ENCODE measurements at regions of chr1 and their contacts with region 1.

Region 1: DNA sequence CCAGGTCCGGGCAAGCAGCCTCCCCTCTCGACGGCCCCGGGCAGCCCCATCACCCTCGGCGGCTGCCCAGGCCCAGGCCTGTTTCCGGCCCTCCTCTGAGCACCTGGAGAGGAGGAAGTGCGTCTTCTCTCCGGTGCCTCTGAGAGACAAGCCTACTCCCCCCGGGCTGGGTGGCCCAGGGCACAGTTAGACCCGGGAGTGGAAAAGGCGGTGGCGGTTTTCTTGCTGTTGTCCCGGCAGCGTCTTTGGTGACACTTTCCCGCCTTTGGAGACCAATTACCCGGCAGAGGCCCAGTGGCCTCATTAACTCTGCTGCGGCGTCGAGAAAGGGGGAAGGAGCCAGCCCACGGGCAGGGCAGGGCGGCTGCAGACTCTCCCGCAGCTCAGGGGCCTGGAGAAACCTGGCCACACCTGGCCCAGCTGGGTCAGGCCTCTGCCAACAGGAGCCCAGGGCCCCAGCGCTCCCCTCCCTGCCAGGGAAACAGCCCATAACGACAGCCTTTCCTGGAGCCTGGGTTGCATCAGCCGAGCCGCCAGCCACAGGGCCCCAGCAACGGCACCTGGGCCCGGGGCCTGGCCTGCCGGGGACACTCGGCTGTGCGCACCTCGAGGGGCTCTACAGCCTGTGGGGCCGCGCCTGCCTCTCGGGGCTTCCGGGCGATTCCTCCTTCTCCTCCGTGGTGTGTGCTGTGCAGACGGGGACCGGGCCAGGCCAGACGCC is 28.4 kb upstream of the C1orf159 start:
- DNase-seq: peak; percentile 71
- ATAC-seq: peak; percentile 97
- H3K4me3 Mint-ChIP-seq: peak overlapping the region; percentile 41
- H3K27ac Mint-ChIP-seq: peak overlapping the region; percentile 93
- H3K4me1 Mint-ChIP-seq: peaks cover 33% of the 10 kb centered on the region
- H3K27me3 Mint-ChIP-seq: no peaks in the 10 kb centered on the region
- CTCF ChIP-seq: no peak

Region 2: DNA sequence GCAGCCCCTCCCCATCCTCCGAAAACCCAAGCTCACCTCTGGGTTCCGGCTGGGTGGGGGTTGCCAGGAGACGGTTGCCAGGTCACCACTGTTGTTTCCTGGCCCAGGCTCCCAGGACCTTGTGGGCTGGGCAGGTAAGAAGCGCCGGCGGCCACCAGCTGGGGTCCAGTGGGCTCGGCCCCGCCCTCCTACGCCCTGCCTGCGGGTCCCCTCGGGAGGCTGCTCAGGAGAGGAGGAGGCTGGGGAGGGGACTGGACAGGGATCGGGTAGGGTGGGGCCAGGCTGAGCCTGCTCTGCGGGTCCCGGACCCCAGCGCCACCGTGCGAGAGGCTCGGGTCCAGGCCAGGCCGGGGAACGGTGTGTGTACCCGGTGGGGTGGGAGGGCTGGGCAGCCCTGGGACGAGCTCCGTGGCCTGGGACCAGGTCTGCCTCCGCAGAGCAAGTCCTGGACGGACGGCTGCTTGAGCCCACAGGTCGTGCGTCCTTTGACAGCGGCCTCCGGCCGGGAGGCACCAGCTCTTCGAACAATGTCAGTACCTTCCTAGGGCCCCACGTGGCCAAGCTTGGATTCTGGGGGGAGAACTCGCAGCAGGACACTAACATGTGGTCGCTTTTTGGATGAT is 29.6 kb after region 1 on chr1 and contains the start of gene TTLL10:
- CTCF ChIA-PET with region 1: no interaction called
- POLR2A ChIA-PET with region 1: interaction called, 3 read pairs
- intact Hi-C with region 1: loop called (anchors 2 kb)
- DNase-seq: peak; percentile 59
- ATAC-seq: peak; percentile 21
- H3K4me3 Mint-ChIP-seq: peak within 1 kb of the TSS; percentile 28
- H3K27ac Mint-ChIP-seq: no peak within 1 kb of the TSS
- H3K4me1 Mint-ChIP-seq: peaks cover 49% of the 10 kb centered on the region
- H3K27me3 Mint-ChIP-seq: peaks cover 10% of the 10 kb centered on the region
- CTCF ChIP-seq: no peak
- total RNA-seq, gene TTLL10: 0.16 TPM in 1 of 2 replicates, not detected in the other

Region 3: DNA sequence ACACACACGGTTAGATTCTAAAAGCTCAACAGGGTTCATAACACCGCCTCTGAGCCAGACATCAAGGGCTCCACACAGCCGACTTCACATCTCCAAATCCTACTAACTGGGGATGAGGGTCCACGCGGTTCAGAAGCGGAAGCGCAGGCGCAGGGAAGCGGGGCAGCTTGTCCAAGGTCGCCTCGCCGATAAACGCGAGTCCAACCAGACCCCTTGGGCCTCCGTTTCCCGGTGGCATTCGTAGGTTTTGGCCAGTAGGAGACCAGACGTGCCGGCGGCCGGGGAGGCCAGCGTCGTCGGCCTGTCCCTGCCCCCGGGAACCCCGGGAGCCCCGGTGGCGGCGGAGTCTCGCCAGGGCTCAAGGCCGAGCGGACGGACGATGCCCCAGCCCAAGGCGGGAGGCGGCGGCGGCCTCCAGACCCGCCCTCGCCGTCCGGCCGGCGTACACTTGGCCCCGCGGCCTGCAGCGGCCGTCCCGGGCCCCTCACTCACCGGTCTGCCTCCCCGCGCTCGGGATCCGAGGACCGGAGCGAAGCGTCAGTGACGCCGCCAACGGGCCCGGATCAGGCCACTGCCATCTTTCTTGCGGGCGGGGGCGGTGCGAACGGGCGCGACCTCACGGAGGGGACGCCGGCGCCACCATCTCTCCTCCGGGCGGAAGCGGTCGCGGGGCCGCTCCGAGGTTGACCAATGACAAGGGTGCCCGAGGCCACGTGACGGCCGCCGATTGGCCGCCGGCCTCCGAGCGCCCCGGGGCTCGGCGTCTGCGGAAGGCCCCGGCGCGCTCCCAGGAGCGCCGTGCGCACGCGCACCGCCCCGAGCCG is 87.3 kb after region 1 on chr1 and contains the start of gene SDF4:
- CTCF ChIA-PET with region 1: no interaction called
- POLR2A ChIA-PET with region 1: no interaction called
- intact Hi-C with region 1: loop called (anchors 5 kb)
- DNase-seq: peak; percentile 91
- ATAC-seq: peak; percentile 94
- H3K4me3 Mint-ChIP-seq: peak within 1 kb of the TSS; percentile 92
- H3K27ac Mint-ChIP-seq: peak within 1 kb of the TSS; percentile 83
- H3K4me1 Mint-ChIP-seq: peaks cover 35% of the 10 kb centered on the region
- H3K27me3 Mint-ChIP-seq: no peaks in the 10 kb centered on the region
- CTCF ChIP-seq: no peak
- total RNA-seq, gene SDF4: 94.4 and 97.9 TPM in 2 replicates

Region 4: GRCh38 chr1:1510912-1511532 is 366.7 kb after region 1 on chr1:
- CTCF ChIA-PET with region 1: no interaction called
- POLR2A ChIA-PET with region 1: no interaction called
- intact Hi-C with region 1: no loop called
- DNase-seq: no peak
- ATAC-seq: no peak
- H3K4me3 Mint-ChIP-seq: peak overlapping the region; percentile 91
- H3K27ac Mint-ChIP-seq: peak overlapping the region; percentile 80
- H3K4me1 Mint-ChIP-seq: peaks cover 14% of the 10 kb centered on the region
- H3K27me3 Mint-ChIP-seq: no peaks in the 10 kb centered on the region
- CTCF ChIP-seq: no peak

Region 5: GRCh38 chr1:1599030-1599919 is 455.0 kb after region 1 on chr1:
- CTCF ChIA-PET with region 1: no interaction called
- POLR2A ChIA-PET with region 1: no interaction called
- intact Hi-C with region 1: no loop called
- DNase-seq: no peak
- ATAC-seq: peak; percentile 53
- H3K4me3 Mint-ChIP-seq: peak overlapping the region; percentile 78
- H3K27ac Mint-ChIP-seq: no peak overlapping the region
- H3K4me1 Mint-ChIP-seq: peaks cover 25% of the 10 kb centered on the region
- H3K27me3 Mint-ChIP-seq: peaks cover 6% of the 10 kb centered on the region
- CTCF ChIP-seq: no peak